Heart left ventricle (tissue), 16 donors: ENCODE measurements at regions of chr7 and their contacts with region 1.

Region 1: DNA sequence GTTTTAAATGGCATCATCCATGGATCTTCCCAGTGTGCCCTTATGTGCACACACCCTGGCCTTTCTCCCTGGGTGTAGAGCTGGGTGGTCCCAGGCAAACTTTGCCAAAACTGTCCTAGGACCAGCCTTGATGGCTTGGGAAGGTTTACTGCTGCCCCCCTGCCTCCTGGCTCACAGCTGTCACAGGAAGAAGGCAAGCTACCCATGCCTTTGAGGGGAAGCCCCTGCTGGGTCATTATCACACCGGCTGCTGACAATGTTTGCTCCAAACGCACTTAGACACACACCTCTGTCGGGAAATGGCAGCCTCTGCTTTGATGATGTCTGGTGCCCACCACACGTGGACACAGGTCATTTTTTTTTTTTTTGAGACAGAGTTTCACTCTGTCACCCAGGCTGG is 25.2 kb upstream of the FIGNL1 start:
- DNase-seq: no peak
- ATAC-seq: no peak
- H3K4me3 ChIP-seq: no peak overlapping the region
- H3K27ac ChIP-seq: no peak overlapping the region
- H3K4me1 ChIP-seq: no peaks in the 10 kb centered on the region
- H3K27me3 ChIP-seq: no peaks in the 10 kb centered on the region
- CTCF ChIP-seq: no peak
- POLR2A ChIP-seq: no peak

Region 2: GRCh38 chr7:50595491-50596102 is 120.3 kb after region 1 on chr7:
- intact Hi-C with region 1: loop called in 3 of 10 experiments (anchors 10 kb)
- DNase-seq: no peak
- ATAC-seq: peak in 3 of 4 donors; percentile 49 to 79 (median 60)
- H3K4me3 ChIP-seq: no peak overlapping the region
- H3K27ac ChIP-seq: no peak overlapping the region
- H3K4me1 ChIP-seq: no peaks in the 10 kb centered on the region
- H3K27me3 ChIP-seq: no peaks in the 10 kb centered on the region
- CTCF ChIP-seq: peak in 8 of 12 donors; percentile 16 to 51 (median 36)
- POLR2A ChIP-seq: no peak

Region 3: DNA sequence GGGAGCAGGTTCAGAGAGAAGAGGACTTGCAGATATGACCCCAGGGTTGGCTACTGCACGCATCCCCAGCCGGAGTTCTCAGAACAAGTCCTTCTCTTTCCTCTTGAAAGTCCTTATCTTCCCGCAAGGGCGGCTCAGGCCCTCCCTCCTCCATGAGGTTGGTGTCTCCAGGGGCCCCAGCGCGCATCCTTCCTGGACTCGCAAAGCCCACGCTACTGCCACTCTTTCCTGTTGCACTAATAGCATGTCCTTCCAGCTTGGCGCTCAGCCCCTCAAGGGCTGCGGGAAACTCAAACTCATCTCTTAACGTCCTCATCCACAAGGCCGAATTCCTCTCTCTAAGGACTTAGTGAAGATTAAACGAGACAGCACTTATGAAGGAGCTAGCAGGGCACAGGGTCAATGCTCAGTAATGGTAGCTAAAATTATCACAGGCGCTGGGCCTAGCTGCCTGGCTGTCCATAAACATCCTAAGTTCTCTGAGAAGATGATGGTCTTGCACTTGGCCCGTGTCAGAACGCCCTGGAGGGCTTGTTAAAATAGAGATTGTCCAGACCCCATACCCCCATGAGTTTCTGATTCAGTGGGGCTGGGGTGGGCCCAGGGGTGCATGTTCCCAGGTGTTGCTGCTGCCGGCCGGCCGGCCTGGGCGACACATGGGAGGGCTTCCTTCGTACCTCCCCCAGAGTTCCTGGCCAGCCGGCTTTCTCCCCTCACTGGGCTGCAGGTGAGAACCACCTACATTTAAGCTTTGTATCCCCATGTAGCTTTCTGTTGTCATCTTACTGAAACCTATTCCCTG is 579.9 kb after region 1 on chr7:
- intact Hi-C with region 1: no loop called
- DNase-seq: peak in 1 of 5 donors; percentile 44
- ATAC-seq: peak in 3 of 4 donors; percentile 36 to 48 (median 46)
- H3K4me3 ChIP-seq: no peak overlapping the region
- H3K27ac ChIP-seq: no peak overlapping the region
- H3K4me1 ChIP-seq: peaks cover 0 to 8% (median 0%) of the 10 kb centered on the region in 12 donors
- H3K27me3 ChIP-seq: no peaks in the 10 kb centered on the region
- CTCF ChIP-seq: no peak
- POLR2A ChIP-seq: no peak